AG04450 (cell line): ENCODE measurements at regions of chr22 and their contacts with region 1.

Region 1: DNA sequence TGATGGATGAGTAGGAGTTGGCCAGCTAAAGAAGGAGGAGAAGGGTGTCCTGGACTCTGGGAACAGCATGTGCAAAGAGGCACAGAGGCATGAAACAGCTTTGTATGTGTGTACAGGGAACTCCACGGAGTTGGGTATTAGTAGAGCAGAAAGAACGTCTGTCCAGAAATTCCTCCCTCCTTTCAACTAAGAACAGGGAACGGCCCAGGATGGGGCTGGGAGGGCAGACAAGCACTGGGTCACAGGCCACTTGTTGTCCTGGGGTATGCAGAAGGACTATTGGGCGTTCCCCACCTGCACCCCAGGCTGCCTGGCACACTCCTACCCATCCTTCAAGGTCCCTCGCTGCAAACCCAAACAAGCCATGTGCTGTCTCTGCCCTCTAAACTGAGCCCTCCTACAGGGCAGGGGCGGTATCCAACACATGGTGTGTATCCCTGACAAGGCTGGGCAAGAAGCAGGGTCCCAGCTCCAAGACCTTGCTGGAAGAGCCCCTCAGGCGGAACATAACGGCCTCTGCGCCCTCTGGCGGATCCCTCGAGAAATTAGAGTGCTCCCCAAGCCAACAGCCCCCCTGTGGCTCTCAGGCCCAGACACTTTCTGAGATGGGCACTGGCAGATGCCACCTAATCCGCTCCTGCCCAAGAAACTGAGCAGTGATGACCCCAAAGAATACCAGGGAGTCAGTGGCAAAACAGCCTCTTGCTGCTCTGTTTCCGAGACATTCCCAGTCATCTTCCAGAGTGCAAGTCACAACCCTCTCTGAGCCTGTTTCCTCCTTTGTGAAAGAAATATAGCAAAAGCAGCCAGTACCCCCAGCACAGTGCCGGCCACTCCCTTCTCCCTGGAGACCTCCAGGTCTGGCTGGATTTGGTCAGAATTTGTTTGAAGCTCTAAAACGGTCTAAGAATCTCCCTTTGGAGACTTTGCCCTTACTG is 1.6 kb upstream of the ELFN2 start:
- DNase-seq: no peak
- H3K4me3 ChIP-seq: no peak overlapping the region
- H3K27ac ChIP-seq: no peak overlapping the region
- H3K27me3 ChIP-seq: no peaks in the 10 kb centered on the region
- CTCF ChIP-seq: peak; percentile 85

Region 2: GRCh38 chr22:37207048-37207821 is 221.7 kb before region 1 on chr22:
- CTCF ChIA-PET with region 1: no interaction called
- POLR2A ChIA-PET with region 1: no interaction called
- DNase-seq: no peak
- H3K4me3 ChIP-seq: no peak overlapping the region
- H3K27ac ChIP-seq: no peak overlapping the region
- H3K27me3 ChIP-seq: peaks cover 18% of the 10 kb centered on the region
- CTCF ChIP-seq: no peak

Region 3: DNA sequence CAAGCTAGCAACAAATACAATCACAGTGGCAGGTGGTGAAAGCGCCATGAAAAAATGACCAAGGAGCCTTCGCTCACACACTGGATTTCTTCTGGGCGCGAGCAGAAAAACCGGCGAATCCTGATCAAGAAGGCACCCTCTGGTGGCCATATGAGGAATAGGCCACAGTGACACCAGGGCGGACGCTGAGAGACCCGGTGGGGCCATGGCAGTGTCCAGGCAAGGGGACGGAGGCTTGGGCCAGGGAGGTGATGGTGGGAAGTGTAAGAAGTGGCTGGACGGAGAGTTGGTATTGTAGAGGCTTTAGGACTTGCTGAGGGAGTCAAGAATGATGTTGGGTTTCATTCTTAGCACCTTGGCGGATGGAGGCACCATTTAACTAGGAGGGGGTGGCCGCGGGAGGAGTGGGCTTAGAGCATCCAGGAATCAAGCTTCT is 168.0 kb before region 1 on chr22:
- CTCF ChIA-PET with region 1: interaction called, 11 read pairs
- POLR2A ChIA-PET with region 1: no interaction called
- DNase-seq: no peak
- H3K4me3 ChIP-seq: no peak overlapping the region
- H3K27ac ChIP-seq: no peak overlapping the region
- H3K27me3 ChIP-seq: peaks cover 5% of the 10 kb centered on the region
- CTCF ChIP-seq: peak; percentile 93

Region 4: GRCh38 chr22:37316875-37317371 is 112.0 kb before region 1 on chr22:
- CTCF ChIA-PET with region 1: interaction called, 74 read pairs
- POLR2A ChIA-PET with region 1: interaction called, 3 read pairs
- DNase-seq: peak; percentile 66
- H3K4me3 ChIP-seq: no peak overlapping the region
- H3K27ac ChIP-seq: no peak overlapping the region
- H3K27me3 ChIP-seq: no peaks in the 10 kb centered on the region
- CTCF ChIP-seq: peak; percentile 95

Region 5: DNA sequence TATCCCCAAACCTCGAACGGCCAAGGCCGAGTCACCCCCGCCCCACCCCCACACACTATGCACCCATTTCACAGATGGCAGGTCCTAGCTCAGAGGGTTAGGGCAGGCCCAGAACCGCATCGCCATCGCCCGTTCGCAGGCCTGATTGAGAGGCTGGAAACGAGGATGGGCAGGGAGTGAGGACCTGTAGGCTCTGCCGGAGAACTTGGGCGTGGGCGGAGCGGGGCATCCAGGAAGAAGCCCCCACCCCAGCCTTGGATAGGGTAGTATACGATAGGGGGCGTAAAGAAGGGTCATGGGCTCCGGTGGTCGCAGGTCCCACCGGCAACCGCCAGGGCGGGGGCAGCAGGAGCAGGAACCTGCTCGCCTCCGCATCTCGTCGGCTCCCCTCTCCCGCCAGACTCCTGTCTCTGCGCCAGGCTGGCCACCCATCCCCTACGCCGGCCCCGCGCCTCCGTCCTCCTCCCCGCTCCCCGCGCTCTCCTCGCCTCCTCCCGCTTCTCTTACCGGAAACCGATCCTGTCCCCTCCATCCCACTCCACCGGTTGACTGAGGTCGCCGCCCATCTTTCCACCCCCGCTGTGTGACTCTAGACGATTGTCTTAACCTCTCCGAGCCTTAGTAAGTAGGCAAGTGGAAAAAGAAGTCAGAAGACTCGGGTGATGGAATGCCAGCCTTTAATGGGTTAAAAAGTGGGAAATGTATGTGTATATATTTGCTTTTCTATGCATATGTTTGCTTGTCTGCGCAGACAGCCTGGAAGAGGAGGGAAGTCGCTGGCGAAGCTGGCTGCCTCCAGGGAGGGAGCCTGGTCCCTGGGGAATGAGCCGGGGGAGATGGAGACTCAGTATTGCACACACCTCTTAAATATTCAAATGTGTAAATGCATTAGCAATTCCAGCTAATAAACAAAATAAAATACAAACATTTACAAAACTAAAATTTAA is 93.8 kb before region 1 on chr22:
- CTCF ChIA-PET with region 1: interaction called, 10 read pairs
- POLR2A ChIA-PET with region 1: no interaction called
- DNase-seq: no peak
- H3K4me3 ChIP-seq: peak overlapping the region; percentile 17
- H3K27ac ChIP-seq: no peak overlapping the region
- H3K27me3 ChIP-seq: peaks cover 3% of the 10 kb centered on the region
- CTCF ChIP-seq: no peak

Region 6: DNA sequence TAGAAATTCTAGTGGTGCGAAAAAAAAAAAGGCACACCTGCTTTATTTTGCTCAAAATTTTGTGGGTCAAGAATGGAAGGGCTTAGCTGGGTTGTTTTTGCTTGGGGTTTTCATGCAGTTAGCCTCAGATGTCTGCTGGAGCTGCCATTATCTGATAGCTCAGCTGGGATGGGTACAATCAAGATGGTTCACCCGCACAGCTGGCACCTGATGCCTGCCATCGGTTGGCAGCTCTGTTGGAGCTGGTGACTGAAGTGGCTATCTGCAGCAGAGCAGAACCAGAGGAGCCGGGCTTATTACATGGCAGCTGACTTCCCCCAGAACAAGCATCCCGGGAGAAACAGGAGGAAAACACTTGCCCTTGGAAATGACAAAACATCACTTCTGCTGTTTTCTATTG is 10.4 kb after region 1 on chr22:
- CTCF ChIA-PET with region 1: interaction called, 10 read pairs
- POLR2A ChIA-PET with region 1: no interaction called
- DNase-seq: no peak
- H3K4me3 ChIP-seq: no peak overlapping the region
- H3K27ac ChIP-seq: no peak overlapping the region
- H3K27me3 ChIP-seq: no peaks in the 10 kb centered on the region
- CTCF ChIP-seq: no peak

Region 7: DNA sequence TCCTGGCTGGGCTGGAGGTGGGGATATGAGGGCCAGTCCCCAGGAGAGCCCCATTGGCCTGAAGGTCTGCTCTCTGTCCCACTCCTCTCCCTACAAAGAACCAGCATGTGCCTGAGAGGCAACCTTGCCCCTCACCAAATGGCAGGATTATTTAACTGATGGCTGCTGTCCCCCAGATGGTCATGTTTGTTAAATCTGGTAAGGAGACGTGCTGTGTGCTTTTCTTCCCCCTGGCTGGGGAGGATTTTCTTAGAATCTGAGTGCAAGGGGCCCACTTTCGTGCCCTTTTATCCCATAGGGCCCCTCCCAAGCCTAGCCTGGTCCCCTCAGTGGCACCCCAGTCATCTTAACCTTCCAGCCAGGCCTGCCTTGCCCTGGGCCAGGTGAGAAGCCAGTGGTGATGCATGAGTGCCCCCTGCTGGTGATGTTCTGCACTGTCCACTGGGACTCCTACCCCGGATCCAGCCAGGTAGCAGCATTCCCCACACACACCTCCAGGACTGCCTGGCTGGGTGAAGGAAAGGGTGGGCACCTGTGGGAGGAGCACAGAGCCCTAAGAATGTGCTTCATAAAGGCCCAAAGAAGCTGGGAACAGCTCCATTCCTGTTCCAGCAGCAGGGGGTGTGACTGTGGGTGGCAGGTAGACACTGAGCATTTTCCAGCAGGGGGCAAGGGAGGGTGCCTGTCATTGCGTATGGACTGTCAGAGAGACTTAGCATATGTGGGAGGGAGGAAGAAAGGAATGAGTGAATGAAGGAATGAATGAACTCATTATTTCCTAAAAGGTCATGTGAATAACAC is 28.4 kb after region 1 on chr22:
- CTCF ChIA-PET with region 1: interaction called, 16 read pairs
- POLR2A ChIA-PET with region 1: interaction called, 6 read pairs
- DNase-seq: no peak
- H3K4me3 ChIP-seq: no peak overlapping the region
- H3K27ac ChIP-seq: no peak overlapping the region
- H3K27me3 ChIP-seq: peaks cover 8% of the 10 kb centered on the region
- CTCF ChIP-seq: peak; percentile 96

Region 8: GRCh38 chr22:37658133-37659065 is 229.5 kb after region 1 on chr22 and contains the start of gene PDXP:
- CTCF ChIA-PET with region 1: no interaction called
- POLR2A ChIA-PET with region 1: no interaction called
- DNase-seq: peak; percentile 100
- H3K4me3 ChIP-seq: peak within 1 kb of the TSS; percentile 78
- H3K27ac ChIP-seq: peak within 1 kb of the TSS; percentile 85
- H3K27me3 ChIP-seq: no peaks in the 10 kb centered on the region
- CTCF ChIP-seq: no peak
- polyA plus RNA-seq, gene PDXP: 11.7 and 17.7 TPM in 2 replicates